IMR-90 (cell line): ENCODE measurements at regions of chr2 and their contacts with region 1.

Region 1: GRCh38 chr2:120735746-120736170 is at the start of gene GLI2:
- DNase-seq: peak; percentile 87
- ATAC-seq: peak; percentile 63
- H3K4me3 ChIP-seq: peak within 1 kb of the TSS; percentile 93
- H3K27ac ChIP-seq: peak within 1 kb of the TSS; percentile 98
- H3K4me1 ChIP-seq: peaks cover 34% of the 10 kb centered on the region
- H3K27me3 ChIP-seq: no peaks in the 10 kb centered on the region
- CTCF ChIP-seq: peak; percentile 85
- POLR2A ChIP-seq: peak; percentile 20; the same call in 1 of the 2 replicates
- RAD21 ChIP-seq: peak; percentile 65
- total RNA-seq, gene GLI2: 3.8 and 4.7 TPM in 2 replicates

Region 2: GRCh38 chr2:120765678-120766395 is 30.1 kb after region 1 on chr2:
- CTCF ChIA-PET with region 1: interaction called, 3 read pairs
- POLR2A ChIA-PET with region 1: interaction called, 3 read pairs
- dilution Hi-C with region 1: no loop called
- in situ Hi-C with region 1: no loop called
- intact Hi-C with region 1: loop called (anchors 1 kb)
- DNase-seq: peak; percentile 99
- ATAC-seq: peak; percentile 84
- H3K4me3 ChIP-seq: no peak overlapping the region
- H3K27ac ChIP-seq: peak overlapping the region; percentile 87
- H3K4me1 ChIP-seq: peaks cover 64% of the 10 kb centered on the region
- H3K27me3 ChIP-seq: no peaks in the 10 kb centered on the region
- CTCF ChIP-seq: no peak
- POLR2A ChIP-seq: peak; percentile 72
- RAD21 ChIP-seq: peak; percentile 37

Region 3: DNA sequence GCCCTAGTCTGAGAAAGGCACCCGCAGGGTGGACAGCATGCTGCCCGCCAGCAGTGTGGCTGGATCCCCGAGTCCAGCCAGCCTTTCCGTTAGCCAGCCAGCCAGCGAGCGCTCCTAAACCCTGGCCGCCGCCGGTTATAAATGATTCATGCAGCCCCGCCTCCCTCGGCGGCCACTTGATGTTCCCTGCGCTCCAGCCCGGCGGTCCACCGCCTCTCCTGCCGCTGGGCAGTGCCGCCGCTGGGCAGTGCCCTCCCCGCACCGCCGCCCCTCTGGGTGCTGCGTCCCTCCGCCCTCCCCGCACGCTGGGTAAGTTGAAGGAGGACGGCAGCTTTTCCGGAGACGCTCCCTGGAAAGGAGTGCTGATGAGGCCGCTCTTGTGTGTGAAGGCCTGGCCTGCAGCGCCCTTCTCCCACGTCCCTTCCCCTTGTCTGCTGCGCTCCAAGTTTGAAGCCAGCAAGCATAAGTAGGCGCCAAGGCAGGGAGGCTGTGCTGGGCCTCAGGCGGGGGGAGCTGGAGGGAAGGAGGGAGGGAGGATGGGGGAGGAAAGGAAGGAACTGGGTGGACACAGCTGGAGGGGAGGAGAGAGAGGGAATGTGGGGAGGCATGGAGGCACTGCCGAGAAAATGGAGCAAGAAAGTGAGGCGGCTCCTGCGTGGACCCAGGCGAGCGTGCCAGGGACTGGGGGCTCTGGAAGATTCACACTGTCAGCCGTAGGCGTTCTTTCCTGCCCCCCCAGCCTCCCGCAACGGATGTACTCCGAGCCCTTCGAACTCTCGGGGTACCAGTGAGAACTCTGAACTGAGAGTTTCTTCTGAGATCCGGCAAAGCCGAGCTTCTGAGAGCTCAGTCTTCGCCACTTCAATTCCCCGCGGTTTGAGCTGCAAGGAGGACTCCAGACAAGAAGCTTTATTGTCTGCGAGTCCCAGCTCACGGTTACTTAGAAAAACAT is 131.8 kb after region 1 on chr2:
- CTCF ChIA-PET with region 1: no interaction called
- POLR2A ChIA-PET with region 1: no interaction called
- dilution Hi-C with region 1: no loop called
- in situ Hi-C with region 1: no loop called
- intact Hi-C with region 1: loop called (anchors 1 kb)
- DNase-seq: peak; percentile 77
- ATAC-seq: peak; percentile 83
- H3K4me3 ChIP-seq: peak overlapping the region; percentile 29
- H3K27ac ChIP-seq: peak overlapping the region; percentile 83
- H3K4me1 ChIP-seq: peaks cover 43% of the 10 kb centered on the region
- H3K27me3 ChIP-seq: no peaks in the 10 kb centered on the region
- CTCF ChIP-seq: 0 out of 2 replicates have a peak, but pooled peaks have one; percentile 1
- POLR2A ChIP-seq: peak; percentile 62
- RAD21 ChIP-seq: peak; percentile 11; the same call in 1 of the 2 replicates

Region 4: DNA sequence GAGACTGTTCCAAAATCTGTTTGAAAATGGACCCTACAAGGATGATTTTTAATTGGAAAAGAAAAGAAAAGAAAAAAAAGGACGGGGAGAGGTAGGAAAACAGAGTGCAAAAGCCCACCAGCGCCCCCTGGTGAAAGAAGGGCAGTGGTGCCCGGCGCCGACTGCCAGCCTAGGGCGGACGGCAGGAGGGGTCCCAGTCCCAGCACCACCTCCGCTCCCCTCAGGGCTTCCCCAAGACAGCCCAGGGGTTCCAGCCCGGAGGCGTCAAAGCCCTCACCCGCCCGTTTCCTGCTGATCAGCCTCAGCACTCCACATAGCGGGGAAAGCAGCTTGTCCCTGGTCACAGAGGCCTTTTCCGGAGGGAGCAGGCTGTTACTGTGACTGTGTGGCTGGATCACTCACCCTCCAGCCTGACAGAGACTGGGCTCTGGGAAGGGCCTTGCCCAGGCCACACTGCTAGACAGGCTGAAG is 335.3 kb after region 1 on chr2:
- CTCF ChIA-PET with region 1: interaction called, 4 read pairs
- POLR2A ChIA-PET with region 1: no interaction called
- dilution Hi-C with region 1: no loop called
- in situ Hi-C with region 1: no loop called
- intact Hi-C with region 1: loop called (anchors 1 kb)
- DNase-seq: peak; percentile 31
- ATAC-seq: peak; percentile 69
- H3K4me3 ChIP-seq: no peak overlapping the region
- H3K27ac ChIP-seq: no peak overlapping the region
- H3K4me1 ChIP-seq: no peaks in the 10 kb centered on the region; the same call in 1 of the 2 replicates
- H3K27me3 ChIP-seq: peaks cover 36% of the 10 kb centered on the region
- CTCF ChIP-seq: peak; percentile 95
- POLR2A ChIP-seq: 0 out of 2 replicates have a peak, but pooled peaks have one; percentile 36
- RAD21 ChIP-seq: peak; percentile 92